GM12878 (cell line): ENCODE measurements at regions of chr11 and their contacts with region 1.

Region 1: GRCh38 chr11:102946237-102946636 is 9.3 kb downstream of the MMP13 start:
- DNase-seq: no peak
- ATAC-seq: no peak
- H3K4me3 ChIP-seq: no peak overlapping the region
- H3K27ac ChIP-seq: no peak overlapping the region
- H3K4me1 ChIP-seq: no peaks in the 10 kb centered on the region
- H3K27me3 ChIP-seq: no peaks in the 10 kb centered on the region
- CTCF ChIP-seq: no peak
- EP300 ChIP-seq: no peak
- POLR2A ChIP-seq: no peak
- RAD21 ChIP-seq: no peak

Region 2: DNA sequence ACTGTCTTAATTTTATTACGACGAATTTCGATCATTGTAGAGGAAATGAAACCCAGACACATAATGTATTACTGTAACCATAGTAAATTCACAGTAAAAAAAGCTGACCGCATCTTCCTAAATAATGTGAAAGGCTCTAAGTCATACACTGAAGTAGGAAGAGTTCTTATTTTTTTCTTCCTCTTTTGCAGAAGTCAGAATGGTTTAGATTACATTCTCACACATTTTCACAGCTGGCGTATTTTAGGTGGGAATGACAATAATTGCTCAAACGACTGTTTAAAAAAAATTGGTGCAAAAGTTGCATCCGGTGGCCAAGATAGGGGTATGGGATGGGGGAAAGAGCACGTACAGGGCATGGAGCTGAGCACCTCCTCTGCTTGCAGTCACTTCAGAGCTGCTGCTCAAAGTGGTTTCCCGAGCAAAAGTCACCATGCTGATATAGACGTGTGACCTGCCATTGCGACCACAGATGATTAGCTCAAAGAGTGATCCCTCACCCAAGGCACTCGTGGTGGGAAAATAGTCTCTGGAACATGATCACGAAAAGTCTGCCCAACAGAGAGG is 26.0 kb before region 1 on chr11:
- CTCF ChIA-PET with region 1: interaction called, 334 read pairs
- POLR2A ChIA-PET with region 1: interaction called, 13 read pairs
- RAD21 ChIA-PET with region 1: interaction called, 110 read pairs
- SMC1A ChIA-PET with region 1: interaction called, 216 read pairs
- in situ Hi-C with region 1: no loop called
- intact Hi-C with region 1: no loop called
- DNase-seq: peak; percentile 71
- ATAC-seq: peak; percentile 87
- H3K4me3 ChIP-seq: no peak overlapping the region
- H3K27ac ChIP-seq: no peak overlapping the region
- H3K4me1 ChIP-seq: no peaks in the 10 kb centered on the region; the same call in none of the 2 replicates
- H3K27me3 ChIP-seq: peaks cover 0 to 3% of the 10 kb centered on the region in 2 experiments; a peak in 1 of 4 replicates
- CTCF ChIP-seq: no peak
- EP300 ChIP-seq: peak; percentile 10 to 47; a peak in 1 of 4 replicates
- POLR2A ChIP-seq: no peak
- RAD21 ChIP-seq: no peak

Region 3: DNA sequence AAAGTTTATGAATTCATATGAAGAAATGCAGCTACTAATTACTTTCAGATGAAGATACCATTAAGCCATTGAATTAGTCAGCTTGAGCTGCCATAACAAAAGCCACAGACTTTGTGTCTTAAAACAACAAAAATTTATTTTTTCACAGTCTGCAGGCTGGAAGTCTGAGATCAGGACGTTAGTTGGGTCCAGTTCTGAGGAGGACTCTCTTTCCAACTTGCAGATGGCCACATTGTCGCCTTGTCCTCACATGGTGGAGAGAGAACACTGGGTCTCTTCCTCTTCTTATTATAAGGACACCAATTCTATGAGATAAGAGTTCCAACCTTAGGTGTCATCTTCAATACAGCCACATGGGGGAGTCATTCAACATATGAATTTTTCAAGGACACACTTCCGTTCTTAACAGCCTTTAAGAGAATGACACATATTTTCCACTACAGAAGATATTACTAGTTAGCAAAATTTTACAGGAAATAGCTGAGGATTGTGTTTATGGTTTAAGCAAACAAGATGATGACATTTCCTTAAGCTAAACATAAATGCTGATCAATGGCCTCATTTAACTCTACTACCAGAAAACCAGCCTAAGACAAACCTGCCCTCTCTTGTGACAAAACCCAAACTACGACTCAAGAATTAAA is 89.7 kb after region 1 on chr11:
- CTCF ChIA-PET with region 1: interaction called, 13 read pairs
- POLR2A ChIA-PET with region 1: interaction called, 3 read pairs
- RAD21 ChIA-PET with region 1: interaction called, 5 read pairs
- SMC1A ChIA-PET with region 1: interaction called, 17 read pairs
- in situ Hi-C with region 1: no loop called
- intact Hi-C with region 1: no loop called
- DNase-seq: peak; percentile 55
- ATAC-seq: peak; percentile 95
- H3K4me3 ChIP-seq: no peak overlapping the region
- H3K27ac ChIP-seq: no peak overlapping the region
- H3K4me1 ChIP-seq: no peaks in the 10 kb centered on the region
- H3K27me3 ChIP-seq: no peaks in the 10 kb centered on the region
- CTCF ChIP-seq: peak; percentile 61 to 67 (median 62)
- EP300 ChIP-seq: no peak
- POLR2A ChIP-seq: no peak
- RAD21 ChIP-seq: peak; percentile 64